GM12878 (cell line): ENCODE measurements at regions of chr13 and their contacts with region 1.

Region 1: GRCh38 chr13:61261746-61262472 is 153.7 kb downstream of the PCDH20 start:
- DNase-seq: no peak
- ATAC-seq: no peak
- H3K4me3 ChIP-seq: no peak overlapping the region
- H3K27ac ChIP-seq: no peak overlapping the region
- H3K4me1 ChIP-seq: no peaks in the 10 kb centered on the region
- H3K27me3 ChIP-seq: no peaks in the 10 kb centered on the region
- CTCF ChIP-seq: no peak
- EP300 ChIP-seq: no peak
- POLR2A ChIP-seq: no peak
- RAD21 ChIP-seq: no peak

Region 2: DNA sequence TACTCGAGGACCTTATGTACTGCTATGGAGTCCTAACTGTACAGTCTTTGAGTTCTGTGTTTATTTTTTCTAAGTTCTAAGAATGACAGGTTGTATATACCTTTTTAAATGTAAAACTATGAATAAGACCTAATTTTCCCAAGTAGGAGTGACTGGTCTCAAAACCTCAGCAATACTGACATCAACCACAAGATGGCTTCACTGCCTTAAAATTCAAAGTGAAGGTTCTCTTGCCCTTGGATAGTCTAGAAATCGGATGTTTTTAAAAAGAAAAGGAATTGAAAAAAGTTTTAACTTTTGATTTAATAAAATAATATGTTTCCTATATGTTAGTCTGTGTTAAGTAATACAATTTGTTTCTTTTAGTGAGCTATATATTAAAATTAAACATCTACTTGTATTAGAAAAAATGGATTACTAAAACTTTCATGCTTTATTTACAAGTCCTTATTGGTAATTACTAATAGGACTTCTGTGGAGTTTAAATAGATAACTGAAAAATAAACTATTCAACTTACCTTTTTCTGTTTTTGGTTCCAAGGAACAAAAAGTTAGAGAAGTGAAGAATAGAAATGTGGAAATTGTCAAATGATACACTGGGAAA is 812.9 kb before region 1 on chr13:
- CTCF ChIA-PET with region 1: interaction called, 6 read pairs
- POLR2A ChIA-PET with region 1: no interaction called
- RAD21 ChIA-PET with region 1: no interaction called
- SMC1A ChIA-PET with region 1: no interaction called
- in situ Hi-C with region 1: no loop called
- intact Hi-C with region 1: loop called (anchors 5 kb)
- DNase-seq: no peak
- ATAC-seq: peak; percentile 61
- H3K4me3 ChIP-seq: no peak overlapping the region
- H3K27ac ChIP-seq: no peak overlapping the region
- H3K4me1 ChIP-seq: no peaks in the 10 kb centered on the region
- H3K27me3 ChIP-seq: no peaks in the 10 kb centered on the region
- CTCF ChIP-seq: peak; percentile 67 to 73 (median 68)
- EP300 ChIP-seq: no peak
- POLR2A ChIP-seq: no peak
- RAD21 ChIP-seq: peak; percentile 82

Region 3: DNA sequence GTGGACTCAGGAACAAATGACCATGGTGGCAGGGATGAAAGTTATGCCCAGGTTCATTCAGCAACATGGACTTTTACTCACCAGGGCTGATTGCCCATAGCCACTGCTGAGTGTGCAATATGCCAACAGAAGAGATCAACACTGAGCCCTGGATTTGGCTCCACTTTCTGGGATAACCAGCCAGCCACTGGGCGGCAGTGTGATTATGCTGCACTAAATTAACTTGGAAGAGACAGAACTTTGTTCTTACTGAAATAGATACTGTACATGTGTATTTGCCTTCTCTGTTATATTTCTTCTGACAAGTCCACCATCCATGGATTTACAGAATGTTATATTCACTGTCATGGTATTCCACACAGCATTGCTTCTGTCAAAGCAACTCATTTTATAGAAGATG is 607.5 kb before region 1 on chr13:
- CTCF ChIA-PET with region 1: interaction called, 6 read pairs
- POLR2A ChIA-PET with region 1: no interaction called
- RAD21 ChIA-PET with region 1: no interaction called
- SMC1A ChIA-PET with region 1: no interaction called
- in situ Hi-C with region 1: no loop called
- intact Hi-C with region 1: loop called (anchors 10 kb)
- DNase-seq: no peak
- ATAC-seq: peak; percentile 65; the same call in 2 of the 3 replicates
- H3K4me3 ChIP-seq: no peak overlapping the region
- H3K27ac ChIP-seq: no peak overlapping the region
- H3K4me1 ChIP-seq: no peaks in the 10 kb centered on the region
- H3K27me3 ChIP-seq: no peaks in the 10 kb centered on the region
- CTCF ChIP-seq: peak; percentile 23 to 52 (median 36); a peak in 3 of 6 replicates
- EP300 ChIP-seq: no peak
- POLR2A ChIP-seq: no peak
- RAD21 ChIP-seq: peak; percentile 38; the same call in 1 of the 2 replicates

Region 4: GRCh38 chr13:61215116-61215515 is 46.8 kb before region 1 on chr13:
- CTCF ChIA-PET with region 1: no interaction called
- POLR2A ChIA-PET with region 1: no interaction called
- RAD21 ChIA-PET with region 1: no interaction called
- SMC1A ChIA-PET with region 1: no interaction called
- in situ Hi-C with region 1: no loop called
- intact Hi-C with region 1: no loop called
- DNase-seq: no peak
- ATAC-seq: no peak
- H3K4me3 ChIP-seq: no peak overlapping the region
- H3K27ac ChIP-seq: no peak overlapping the region
- H3K4me1 ChIP-seq: no peaks in the 10 kb centered on the region
- H3K27me3 ChIP-seq: no peaks in the 10 kb centered on the region
- CTCF ChIP-seq: no peak
- EP300 ChIP-seq: no peak
- POLR2A ChIP-seq: no peak
- RAD21 ChIP-seq: no peak

Region 5: GRCh38 chr13:61350351-61350750 is 88.4 kb after region 1 on chr13:
- CTCF ChIA-PET with region 1: no interaction called
- POLR2A ChIA-PET with region 1: no interaction called
- RAD21 ChIA-PET with region 1: no interaction called
- SMC1A ChIA-PET with region 1: no interaction called
- in situ Hi-C with region 1: no loop called
- intact Hi-C with region 1: no loop called
- DNase-seq: no peak
- ATAC-seq: no peak
- H3K4me3 ChIP-seq: no peak overlapping the region
- H3K27ac ChIP-seq: no peak overlapping the region
- H3K4me1 ChIP-seq: no peaks in the 10 kb centered on the region
- H3K27me3 ChIP-seq: no peaks in the 10 kb centered on the region
- CTCF ChIP-seq: no peak
- EP300 ChIP-seq: no peak
- POLR2A ChIP-seq: no peak
- RAD21 ChIP-seq: no peak

Region 6: DNA sequence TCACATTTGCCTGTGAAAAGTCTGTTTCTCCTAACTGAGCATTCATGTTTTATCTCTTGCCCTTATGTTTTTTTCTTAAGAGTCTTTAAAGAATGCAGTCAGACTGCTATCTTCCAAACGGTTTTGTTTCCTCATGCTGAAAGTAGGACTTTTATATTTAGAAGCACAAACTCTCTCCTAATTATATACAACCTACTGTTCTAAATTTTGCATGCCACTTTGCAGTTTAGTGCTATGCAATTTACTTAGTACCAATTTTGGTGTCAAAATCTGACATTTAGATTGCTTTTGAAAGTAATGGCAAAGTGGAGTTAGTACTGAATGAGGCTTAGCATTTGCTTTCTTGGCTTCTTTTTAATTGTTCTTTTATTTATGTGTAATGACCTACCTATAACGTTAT is 208.9 kb after region 1 on chr13:
- CTCF ChIA-PET with region 1: no interaction called
- POLR2A ChIA-PET with region 1: no interaction called
- RAD21 ChIA-PET with region 1: no interaction called
- SMC1A ChIA-PET with region 1: no interaction called
- in situ Hi-C with region 1: no loop called
- intact Hi-C with region 1: no loop called
- DNase-seq: no peak
- ATAC-seq: no peak
- H3K4me3 ChIP-seq: no peak overlapping the region
- H3K27ac ChIP-seq: no peak overlapping the region
- H3K4me1 ChIP-seq: no peaks in the 10 kb centered on the region
- H3K27me3 ChIP-seq: no peaks in the 10 kb centered on the region
- CTCF ChIP-seq: no peak
- EP300 ChIP-seq: no peak
- POLR2A ChIP-seq: no peak
- RAD21 ChIP-seq: no peak